Lower leg skin (tissue), 4 donors: ENCODE measurements at regions of chr5 and their contacts with region 1.

Region 1: DNA sequence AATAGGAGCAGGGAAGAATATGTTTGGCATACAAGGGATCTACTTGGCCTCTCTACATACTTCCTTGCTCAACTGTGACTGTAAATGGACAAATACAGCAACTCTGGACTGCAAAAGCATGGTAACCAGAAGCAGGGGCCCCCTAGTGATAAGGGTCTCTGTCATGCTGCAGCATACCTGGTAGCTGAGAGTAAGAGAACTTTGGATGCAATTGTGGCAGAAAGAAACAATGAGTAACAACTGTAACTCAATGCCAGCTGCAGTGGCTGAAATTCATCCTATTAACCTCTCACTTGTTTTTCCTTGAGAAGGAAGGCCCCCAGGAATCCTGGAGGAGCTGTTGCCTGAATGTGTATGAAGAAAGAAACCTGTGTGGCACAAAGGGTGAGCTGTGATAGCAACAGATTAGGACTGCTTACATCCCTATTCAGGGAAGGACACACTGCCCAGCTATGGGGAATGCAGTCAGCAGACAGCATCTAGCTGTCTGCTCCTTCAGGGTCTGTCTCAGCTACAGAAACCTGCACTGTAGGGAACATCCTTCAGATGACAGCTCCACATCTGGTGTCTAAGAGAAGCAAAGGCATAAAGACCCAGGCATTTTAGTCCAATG is 468.1 kb upstream of the ACTBL2 start:
- DNase-seq: no peak
- H3K4me3 ChIP-seq: no peak overlapping the region
- CTCF ChIP-seq: no peak
- POLR2A ChIP-seq: no peak

Region 2: GRCh38 chr5:57450991-57451876 is 499.5 kb before region 1 on chr5:
- intact Hi-C with region 1: no loop called
- DNase-seq: no peak
- H3K4me3 ChIP-seq: no peak overlapping the region
- CTCF ChIP-seq: no peak
- POLR2A ChIP-seq: no peak

Region 3: GRCh38 chr5:57824047-57824446 is 126.7 kb before region 1 on chr5:
- intact Hi-C with region 1: loop called (anchors 5 kb)
- DNase-seq: no peak
- H3K4me3 ChIP-seq: no peak overlapping the region
- CTCF ChIP-seq: no peak
- POLR2A ChIP-seq: no peak